CD8-positive, alpha-beta T cell (primary cell): ENCODE measurements at regions of chr12 and their contacts with region 1.

Region 1: GRCh38 chr12:52980693-52981423 is 25.4 kb upstream of the EIF4B start:
- DNase-seq: peak; percentile 63 to 90 (median 83)
- ATAC-seq: peak; percentile 94
- H3K4me3 ChIP-seq: no peak overlapping the region
- H3K4me3 Mint-ChIP-seq: no peak overlapping the region
- H3K27ac ChIP-seq: no peak overlapping the region
- H3K27ac Mint-ChIP-seq: no peak overlapping the region
- H3K4me1 ChIP-seq: no peaks in the 10 kb centered on the region
- H3K4me1 Mint-ChIP-seq: no peaks in the 10 kb centered on the region
- H3K27me3 ChIP-seq: peaks cover 0 to 4% of the 10 kb centered on the region in 2 experiments
- H3K27me3 Mint-ChIP-seq: peaks cover 45% of the 10 kb centered on the region
- CTCF ChIP-seq: peak; percentile 92

Region 2: DNA sequence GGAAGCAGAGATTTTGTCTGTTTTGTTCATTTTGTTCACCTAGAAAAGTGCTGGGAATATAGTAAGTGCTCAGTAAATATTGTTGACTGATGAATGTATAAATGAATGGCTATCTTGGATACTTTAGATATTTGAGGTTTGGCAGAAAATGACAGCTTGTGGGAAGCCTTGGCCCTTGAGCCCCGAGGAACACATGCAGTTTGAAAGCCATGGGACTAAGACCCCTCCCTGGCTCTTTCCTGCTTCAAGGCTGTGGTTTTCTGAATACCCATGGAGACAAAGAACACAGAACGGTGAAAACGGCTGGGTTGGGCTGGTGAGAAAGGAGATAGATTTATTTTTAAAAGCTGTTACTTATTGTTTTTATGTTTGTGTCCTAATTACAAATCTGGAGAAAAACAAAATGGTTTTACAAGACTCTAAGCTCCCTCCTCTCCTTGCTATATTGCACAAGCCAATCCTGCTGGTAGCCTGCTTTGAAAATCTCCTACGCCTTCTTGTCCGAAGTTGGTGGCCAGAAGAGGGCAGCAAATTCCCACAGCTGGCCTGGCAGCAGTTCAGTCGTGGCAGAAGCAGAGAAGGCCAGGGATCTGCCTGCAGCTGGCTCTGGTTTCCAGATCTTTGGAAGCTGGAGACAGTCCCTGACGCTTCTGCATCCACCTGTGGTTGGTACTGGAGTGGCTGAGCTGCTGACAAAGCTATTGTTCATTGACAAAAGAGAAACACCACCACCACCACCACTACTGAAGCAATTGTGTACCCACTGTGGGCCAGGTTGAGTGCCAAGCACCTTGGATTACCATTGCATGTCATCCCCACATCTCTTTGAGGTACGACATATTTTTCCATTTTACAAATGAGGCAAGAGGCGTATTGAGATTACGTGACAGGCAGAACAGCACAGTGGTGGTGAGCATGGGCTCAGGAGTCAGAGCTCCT is 608.4 kb before region 1 on chr12:
- CTCF ChIA-PET with region 1: interaction called, 11 read pairs
- POLR2A ChIA-PET with region 1: no interaction called
- intact Hi-C with region 1: loop called (anchors 2 kb)
- DNase-seq: peak; percentile 31 to 75 (median 60)
- ATAC-seq: no peak
- H3K4me3 ChIP-seq: no peak overlapping the region
- H3K4me3 Mint-ChIP-seq: no peak overlapping the region
- H3K27ac ChIP-seq: no peak overlapping the region
- H3K27ac Mint-ChIP-seq: no peak overlapping the region
- H3K4me1 ChIP-seq: no peaks in the 10 kb centered on the region
- H3K4me1 Mint-ChIP-seq: no peaks in the 10 kb centered on the region
- H3K27me3 ChIP-seq: peaks cover 0 to 2% of the 10 kb centered on the region in 2 experiments
- H3K27me3 Mint-ChIP-seq: peaks cover 21% of the 10 kb centered on the region
- CTCF ChIP-seq: peak; percentile 34

Region 3: DNA sequence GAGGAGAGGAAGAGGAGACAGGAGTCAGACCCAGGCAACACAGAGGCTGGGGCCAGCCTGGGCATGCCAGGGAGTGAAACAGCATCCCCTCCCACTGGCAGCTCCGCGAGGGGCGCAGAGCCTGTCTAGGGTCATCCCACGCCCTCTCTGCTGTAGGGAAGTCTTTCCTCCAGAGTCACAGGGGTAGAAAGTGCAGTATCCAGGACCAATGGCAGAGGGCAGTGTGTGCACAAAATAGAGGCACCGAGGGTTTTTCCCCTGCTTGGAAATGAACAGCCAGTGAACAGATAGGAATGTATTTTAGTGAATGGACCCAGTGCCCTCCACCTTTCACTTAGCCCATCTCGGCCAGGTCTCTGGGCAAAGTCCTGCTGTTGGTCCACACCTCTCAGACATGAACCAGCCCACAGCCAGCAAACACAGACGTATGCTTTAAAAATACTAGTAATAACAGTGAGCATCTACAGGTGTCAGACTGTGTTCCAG is 397.8 kb before region 1 on chr12:
- CTCF ChIA-PET with region 1: interaction called, 17 read pairs
- POLR2A ChIA-PET with region 1: no interaction called
- intact Hi-C with region 1: loop called (anchors 1 kb)
- DNase-seq: peak; percentile 48 to 83 (median 70)
- ATAC-seq: peak; percentile 27
- H3K4me3 ChIP-seq: no peak overlapping the region
- H3K4me3 Mint-ChIP-seq: no peak overlapping the region
- H3K27ac ChIP-seq: no peak overlapping the region
- H3K27ac Mint-ChIP-seq: peak overlapping the region; percentile 52
- H3K4me1 ChIP-seq: peaks cover 45% of the 10 kb centered on the region
- H3K4me1 Mint-ChIP-seq: peaks cover 48% of the 10 kb centered on the region
- H3K27me3 ChIP-seq: no peaks in the 10 kb centered on the region
- H3K27me3 Mint-ChIP-seq: peaks cover 3% of the 10 kb centered on the region
- CTCF ChIP-seq: peak; percentile 76

Region 4: DNA sequence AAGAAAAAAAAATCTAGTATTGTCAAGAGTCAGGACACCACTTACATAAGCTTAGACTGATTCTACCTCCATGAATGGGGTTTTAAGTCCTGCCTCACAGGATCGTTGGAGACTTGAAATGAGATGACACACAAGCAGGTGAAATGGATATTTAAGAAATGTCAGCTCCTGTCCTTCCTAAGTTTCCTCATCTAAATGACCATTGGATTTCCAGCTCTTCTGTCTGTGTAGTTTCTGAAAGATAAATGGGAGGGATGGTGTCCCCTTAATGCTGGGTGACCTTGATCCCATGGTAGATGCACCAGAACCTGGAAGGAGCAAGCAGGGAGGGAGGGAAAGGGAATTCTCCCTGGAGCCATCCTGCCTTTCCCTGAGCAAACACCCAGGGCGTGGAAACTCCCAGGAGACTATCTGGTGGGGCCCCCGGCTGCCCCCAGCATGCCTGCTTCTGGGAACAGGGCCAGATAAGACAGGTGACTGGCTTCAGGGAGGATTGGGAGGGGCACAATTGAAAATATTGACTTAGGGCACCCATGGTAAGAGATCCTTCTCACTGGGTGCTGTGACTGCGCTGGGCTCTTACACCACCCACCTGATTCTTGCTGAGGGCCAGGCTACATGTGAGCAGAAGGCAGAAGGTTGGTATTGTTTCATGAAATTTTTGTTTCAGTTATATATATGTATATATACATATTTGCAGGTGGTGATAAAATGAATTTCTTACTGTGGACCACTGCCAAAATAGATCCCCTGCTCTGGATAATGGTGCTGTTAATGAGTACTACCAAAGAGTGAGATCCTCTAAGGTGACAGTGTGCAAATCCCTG is 85.6 kb before region 1 on chr12:
- CTCF ChIA-PET with region 1: interaction called, 33 read pairs
- POLR2A ChIA-PET with region 1: no interaction called
- intact Hi-C with region 1: no loop called
- DNase-seq: no peak
- ATAC-seq: no peak
- H3K4me3 ChIP-seq: no peak overlapping the region
- H3K4me3 Mint-ChIP-seq: no peak overlapping the region
- H3K27ac ChIP-seq: no peak overlapping the region
- H3K27ac Mint-ChIP-seq: no peak overlapping the region
- H3K4me1 ChIP-seq: no peaks in the 10 kb centered on the region
- H3K4me1 Mint-ChIP-seq: no peaks in the 10 kb centered on the region
- H3K27me3 ChIP-seq: peaks cover 0 to 2% of the 10 kb centered on the region in 2 experiments
- H3K27me3 Mint-ChIP-seq: peaks cover 5% of the 10 kb centered on the region
- CTCF ChIP-seq: no peak

Region 5: GRCh38 chr12:52956987-52957386 is 23.9 kb before region 1 on chr12:
- CTCF ChIA-PET with region 1: interaction called, 12 read pairs
- POLR2A ChIA-PET with region 1: no interaction called
- intact Hi-C with region 1: no loop called
- DNase-seq: peak in 1 of 9 experiments; percentile 16
- ATAC-seq: no peak
- H3K4me3 ChIP-seq: no peak overlapping the region
- H3K4me3 Mint-ChIP-seq: no peak overlapping the region
- H3K27ac ChIP-seq: no peak overlapping the region
- H3K27ac Mint-ChIP-seq: no peak overlapping the region
- H3K4me1 ChIP-seq: no peaks in the 10 kb centered on the region
- H3K4me1 Mint-ChIP-seq: peaks cover 6% of the 10 kb centered on the region
- H3K27me3 ChIP-seq: no peaks in the 10 kb centered on the region
- H3K27me3 Mint-ChIP-seq: peaks cover 3% of the 10 kb centered on the region
- CTCF ChIP-seq: no peak

Region 6: DNA sequence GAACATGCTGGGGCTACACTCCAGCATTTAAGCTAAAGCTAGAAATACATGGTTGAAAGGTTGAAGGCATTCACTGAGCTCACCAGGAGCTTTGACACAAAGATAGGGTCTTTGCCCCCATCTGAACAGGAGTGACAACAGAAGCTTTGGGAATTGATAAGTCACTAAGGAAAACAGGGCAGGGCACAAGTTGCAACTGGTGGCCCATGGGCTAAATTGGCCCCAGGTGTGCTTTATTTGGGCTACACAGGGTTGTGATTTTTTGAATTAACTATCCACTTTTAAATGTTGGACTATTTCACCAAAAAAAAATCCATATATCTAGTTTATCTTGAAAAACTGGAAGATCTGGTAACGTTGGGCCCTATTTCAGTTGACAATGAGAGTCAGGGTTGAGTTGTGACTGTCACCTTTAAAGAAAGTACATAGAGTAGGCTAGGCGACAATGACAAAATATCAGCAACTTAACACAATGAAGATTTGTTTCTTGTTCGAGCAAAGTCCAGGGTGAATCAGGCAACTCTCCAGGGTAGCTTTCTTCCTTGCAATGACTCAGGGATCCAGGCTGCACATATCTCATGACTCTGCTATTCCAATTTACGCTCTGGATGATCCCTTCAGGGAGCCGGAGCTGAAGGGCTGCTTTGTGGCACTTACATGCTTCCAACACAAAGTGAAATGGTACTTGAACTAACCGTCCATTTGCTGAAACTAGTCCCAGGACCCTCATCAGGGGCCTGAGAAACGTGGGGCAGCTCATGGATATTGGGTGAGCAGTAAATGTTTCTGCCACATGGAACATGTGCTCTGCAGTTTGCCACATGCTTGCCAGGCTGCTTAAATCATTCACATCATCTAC is 12.1 kb after region 1 on chr12:
- CTCF ChIA-PET with region 1: interaction called, 26 read pairs
- POLR2A ChIA-PET with region 1: no interaction called
- intact Hi-C with region 1: no loop called
- DNase-seq: no peak
- ATAC-seq: no peak
- H3K4me3 ChIP-seq: no peak overlapping the region
- H3K4me3 Mint-ChIP-seq: no peak overlapping the region
- H3K27ac ChIP-seq: no peak overlapping the region
- H3K27ac Mint-ChIP-seq: no peak overlapping the region
- H3K4me1 ChIP-seq: no peaks in the 10 kb centered on the region
- H3K4me1 Mint-ChIP-seq: no peaks in the 10 kb centered on the region
- H3K27me3 ChIP-seq: no peaks in the 10 kb centered on the region
- H3K27me3 Mint-ChIP-seq: no peaks in the 10 kb centered on the region
- CTCF ChIP-seq: no peak

Region 7: GRCh38 chr12:53295070-53295890 is 314.4 kb after region 1 on chr12 and contains the start of gene PFDN5:
- CTCF ChIA-PET with region 1: no interaction called
- POLR2A ChIA-PET with region 1: no interaction called
- intact Hi-C with region 1: no loop called
- DNase-seq: peak; percentile 72 to 95 (median 87)
- ATAC-seq: peak; percentile 92
- H3K4me3 ChIP-seq: peak within 1 kb of the TSS; percentile 75 to 88
- H3K4me3 Mint-ChIP-seq: peak within 1 kb of the TSS; percentile 99
- H3K27ac ChIP-seq: peak within 1 kb of the TSS; percentile 80 to 82
- H3K27ac Mint-ChIP-seq: peak within 1 kb of the TSS; percentile 99
- H3K4me1 ChIP-seq: peaks cover 28% of the 10 kb centered on the region
- H3K4me1 Mint-ChIP-seq: peaks cover 51% of the 10 kb centered on the region
- H3K27me3 ChIP-seq: no peaks in the 10 kb centered on the region
- H3K27me3 Mint-ChIP-seq: no peaks in the 10 kb centered on the region
- CTCF ChIP-seq: no peak
- total RNA-seq, gene PFDN5: 741 to 751 TPM